GM12878 (cell line): ENCODE measurements at regions of chr2 and their contacts with region 1.

Region 1: GRCh38 chr2:33372940-33373553 is 103.4 kb upstream of the RASGRP3 start:
- DNase-seq: peak; percentile 19
- ATAC-seq: peak; percentile 73
- H3K4me3 ChIP-seq: no peak overlapping the region
- H3K27ac ChIP-seq: no peak overlapping the region
- H3K4me1 ChIP-seq: no peaks in the 10 kb centered on the region
- H3K27me3 ChIP-seq: no peaks in the 10 kb centered on the region; a peak in 1 of 4 replicates
- CTCF ChIP-seq: peak; percentile 74 to 83 (median 80); a peak in 5 of 6 replicates
- EP300 ChIP-seq: no peak
- POLR2A ChIP-seq: no peak
- RAD21 ChIP-seq: peak; percentile 86

Region 2: GRCh38 chr2:32553829-32554432 is 819.1 kb before region 1 on chr2:
- CTCF ChIA-PET with region 1: interaction called, 4 read pairs
- POLR2A ChIA-PET with region 1: no interaction called
- RAD21 ChIA-PET with region 1: interaction called, 3 read pairs
- SMC1A ChIA-PET with region 1: no interaction called
- in situ Hi-C with region 1: loop called (anchors 10 kb)
- intact Hi-C with region 1: loop called (anchors 5 kb)
- DNase-seq: peak; percentile 19
- ATAC-seq: peak; percentile 99
- H3K4me3 ChIP-seq: no peak overlapping the region
- H3K27ac ChIP-seq: no peak overlapping the region
- H3K4me1 ChIP-seq: peaks cover 4% of the 10 kb centered on the region
- H3K27me3 ChIP-seq: no peaks in the 10 kb centered on the region
- CTCF ChIP-seq: peak; percentile 66 to 75 (median 70)
- EP300 ChIP-seq: no peak
- POLR2A ChIP-seq: no peak
- RAD21 ChIP-seq: peak; percentile 76

Region 3: GRCh38 chr2:32772638-32773447 is 600.2 kb before region 1 on chr2:
- CTCF ChIA-PET with region 1: interaction called, 9 read pairs
- POLR2A ChIA-PET with region 1: no interaction called
- RAD21 ChIA-PET with region 1: interaction called, 4 read pairs
- SMC1A ChIA-PET with region 1: interaction called, 9 read pairs
- in situ Hi-C with region 1: loop called (anchors 5 kb)
- intact Hi-C with region 1: loop called (anchors 1 kb)
- DNase-seq: no peak
- ATAC-seq: peak; percentile 71
- H3K4me3 ChIP-seq: no peak overlapping the region
- H3K27ac ChIP-seq: no peak overlapping the region
- H3K4me1 ChIP-seq: no peaks in the 10 kb centered on the region
- H3K27me3 ChIP-seq: no peaks in the 10 kb centered on the region
- CTCF ChIP-seq: peak; percentile 36 to 68 (median 55); a peak in 5 of 6 replicates
- EP300 ChIP-seq: no peak
- POLR2A ChIP-seq: no peak
- RAD21 ChIP-seq: peak; percentile 92

Region 4: GRCh38 chr2:32946314-32947075 is 426.6 kb before region 1 on chr2 and contains the start of gene LTBP1:
- CTCF ChIA-PET with region 1: no interaction called
- POLR2A ChIA-PET with region 1: no interaction called
- RAD21 ChIA-PET with region 1: no interaction called
- SMC1A ChIA-PET with region 1: no interaction called
- in situ Hi-C with region 1: no loop called
- intact Hi-C with region 1: loop called (anchors 5 kb)
- DNase-seq: no peak
- ATAC-seq: peak; percentile 94
- H3K4me3 ChIP-seq: peak within 1 kb of the TSS; percentile 65
- H3K27ac ChIP-seq: no peak within 1 kb of the TSS
- H3K4me1 ChIP-seq: peaks cover 4% of the 10 kb centered on the region; the same call in 1 of the 2 replicates
- H3K27me3 ChIP-seq: peaks cover 0 to 6% of the 10 kb centered on the region in 2 experiments
- CTCF ChIP-seq: peak; percentile 64 to 81 (median 73)
- EP300 ChIP-seq: no peak
- POLR2A ChIP-seq: no peak
- RAD21 ChIP-seq: peak; percentile 60
- polyA plus RNA-seq, gene LTBP1: not detected

Region 5: GRCh38 chr2:33033606-33034081 is 339.4 kb before region 1 on chr2:
- CTCF ChIA-PET with region 1: interaction called, 6 read pairs
- POLR2A ChIA-PET with region 1: no interaction called
- RAD21 ChIA-PET with region 1: no interaction called
- SMC1A ChIA-PET with region 1: interaction called, 3 read pairs
- in situ Hi-C with region 1: no loop called
- intact Hi-C with region 1: loop called (anchors 5 kb)
- DNase-seq: no peak
- ATAC-seq: no peak
- H3K4me3 ChIP-seq: no peak overlapping the region
- H3K27ac ChIP-seq: no peak overlapping the region
- H3K4me1 ChIP-seq: no peaks in the 10 kb centered on the region
- H3K27me3 ChIP-seq: no peaks in the 10 kb centered on the region
- CTCF ChIP-seq: peak in 2 of 3 experiments; percentile 28 to 32; a peak in 4 of 6 replicates
- EP300 ChIP-seq: no peak
- POLR2A ChIP-seq: no peak
- RAD21 ChIP-seq: peak; percentile 51

Region 6: GRCh38 chr2:34004936-34005335 is 631.9 kb after region 1 on chr2:
- CTCF ChIA-PET with region 1: no interaction called
- POLR2A ChIA-PET with region 1: no interaction called
- RAD21 ChIA-PET with region 1: no interaction called
- SMC1A ChIA-PET with region 1: no interaction called
- in situ Hi-C with region 1: no loop called
- intact Hi-C with region 1: no loop called
- DNase-seq: no peak
- ATAC-seq: no peak
- H3K4me3 ChIP-seq: no peak overlapping the region
- H3K27ac ChIP-seq: no peak overlapping the region
- H3K4me1 ChIP-seq: no peaks in the 10 kb centered on the region
- H3K27me3 ChIP-seq: no peaks in the 10 kb centered on the region; a peak in 1 of 4 replicates
- CTCF ChIP-seq: no peak
- EP300 ChIP-seq: no peak
- POLR2A ChIP-seq: no peak
- RAD21 ChIP-seq: no peak